CD8-positive, alpha-beta memory T cell (primary cell): ENCODE measurements at regions of chr1 and their contacts with region 1.

Region 1: GRCh38 chr1:109643385-109644230 is 12.3 kb upstream of the GSTM4 start:
- DNase-seq: peak; percentile 67 to 88 (median 74)
- H3K4me3 ChIP-seq: no peak overlapping the region
- H3K4me3 Mint-ChIP-seq: no peak overlapping the region
- H3K27ac ChIP-seq: no peak overlapping the region
- H3K27ac Mint-ChIP-seq: peak overlapping the region in 2 of 8 donors; percentile 29 to 54
- H3K4me1 ChIP-seq: peaks cover 4% of the 10 kb centered on the region
- H3K4me1 Mint-ChIP-seq: peaks cover 4 to 12% (median 7%) of the 10 kb centered on the region in 3 donors
- H3K27me3 ChIP-seq: no peaks in the 10 kb centered on the region
- H3K27me3 Mint-ChIP-seq: peaks cover 0 to 3% of the 10 kb centered on the region in 2 donors

Region 2: DNA sequence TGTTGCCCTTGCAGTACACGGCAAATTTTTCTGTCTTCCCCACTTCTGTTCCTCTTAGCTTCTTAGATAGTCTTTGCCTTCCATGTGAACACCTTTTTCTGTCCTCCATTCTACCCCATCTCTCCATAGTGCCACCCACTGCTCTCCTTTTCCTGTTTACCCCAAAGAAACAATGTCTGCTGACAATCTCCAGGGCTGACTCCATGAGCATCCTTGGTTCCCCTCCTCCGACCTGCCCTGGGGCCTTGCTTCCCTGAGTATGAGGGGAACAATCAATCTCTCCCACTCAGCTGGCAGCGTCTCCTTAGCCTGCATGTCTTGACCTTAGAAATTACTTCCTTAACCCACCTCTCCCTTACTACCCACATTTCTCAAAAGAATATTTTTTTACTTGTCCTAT is 324.5 kb before region 1 on chr1:
- CTCF ChIA-PET with region 1: no interaction called
- POLR2A ChIA-PET with region 1: no interaction called
- DNase-seq: no peak
- H3K4me3 ChIP-seq: no peak overlapping the region
- H3K4me3 Mint-ChIP-seq: no peak overlapping the region
- H3K27ac ChIP-seq: no peak overlapping the region
- H3K27ac Mint-ChIP-seq: no peak overlapping the region
- H3K4me1 ChIP-seq: no peaks in the 10 kb centered on the region
- H3K4me1 Mint-ChIP-seq: no peaks in the 10 kb centered on the region
- H3K27me3 ChIP-seq: no peaks in the 10 kb centered on the region
- H3K27me3 Mint-ChIP-seq: peaks cover 0 to 4% of the 10 kb centered on the region in 2 donors

Region 3: DNA sequence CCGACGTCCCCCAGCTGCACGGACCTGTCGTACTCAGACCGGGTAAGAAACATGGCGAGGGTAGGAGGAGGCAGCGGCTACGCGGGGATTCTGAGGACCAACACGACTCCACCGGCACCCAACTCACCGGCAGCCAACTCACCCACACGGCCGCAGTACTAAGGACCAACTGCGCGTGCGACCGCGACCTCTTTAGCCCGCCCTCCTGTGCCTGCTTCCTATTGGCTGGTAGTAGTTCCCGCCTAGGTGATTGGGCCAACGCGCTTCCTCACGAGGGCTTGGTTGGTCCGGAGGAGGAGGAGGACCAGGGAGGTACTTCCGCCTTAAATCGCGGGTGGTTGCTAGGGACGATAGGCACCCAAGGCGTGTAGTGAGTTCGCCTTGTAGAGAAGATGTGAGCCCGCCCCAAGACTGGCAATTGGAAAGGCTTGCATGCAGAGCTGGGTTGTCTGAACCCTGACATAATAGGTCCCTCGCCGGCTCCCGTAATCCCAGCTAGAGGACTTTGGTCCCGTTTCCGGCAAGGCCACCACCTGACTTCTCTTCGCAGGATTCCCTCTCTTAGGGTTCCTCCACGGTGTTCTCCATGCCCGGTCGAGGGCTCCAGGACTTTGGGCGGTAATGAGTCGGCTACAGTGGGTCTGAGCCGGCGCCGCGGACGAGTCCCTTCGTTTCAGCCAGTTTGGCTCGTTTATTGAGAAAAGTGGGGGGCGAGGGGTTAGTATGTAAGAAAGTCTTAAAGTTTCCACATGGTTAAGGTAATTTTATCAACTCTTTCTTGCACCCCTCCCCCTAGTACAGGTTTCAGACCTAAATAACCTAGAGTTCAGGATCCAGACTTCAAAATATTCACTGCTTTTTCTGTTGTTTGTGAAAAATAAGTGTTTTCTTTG is 217.1 kb before region 1 on chr1 and contains the start of gene PSMA5:
- CTCF ChIA-PET with region 1: interaction called, 4 read pairs
- POLR2A ChIA-PET with region 1: interaction called, 10 read pairs
- DNase-seq: peak; percentile 89 to 98 (median 94)
- H3K4me3 ChIP-seq: peak within 1 kb of the TSS; percentile 85
- H3K4me3 Mint-ChIP-seq: peak within 1 kb of the TSS; percentile 96 to 99 (median 98)
- H3K27ac ChIP-seq: peak within 1 kb of the TSS; percentile 94
- H3K27ac Mint-ChIP-seq: peak within 1 kb of the TSS; percentile 96 to 100 (median 99)
- H3K4me1 ChIP-seq: peaks cover 45% of the 10 kb centered on the region
- H3K4me1 Mint-ChIP-seq: peaks cover 35 to 47% (median 47%) of the 10 kb centered on the region in 3 donors
- H3K27me3 ChIP-seq: no peaks in the 10 kb centered on the region
- H3K27me3 Mint-ChIP-seq: no peaks in the 10 kb centered on the region
- total RNA-seq, gene PSMA5: 207 to 238 TPM

Region 4: GRCh38 chr1:109484519-109484975 is 159.1 kb before region 1 on chr1:
- CTCF ChIA-PET with region 1: no interaction called
- POLR2A ChIA-PET with region 1: no interaction called
- DNase-seq: no peak
- H3K4me3 ChIP-seq: peak overlapping the region; percentile 78
- H3K4me3 Mint-ChIP-seq: peak overlapping the region; percentile 85 to 99 (median 94)
- H3K27ac ChIP-seq: peak overlapping the region; percentile 79
- H3K27ac Mint-ChIP-seq: peak overlapping the region; percentile 73 to 95 (median 87)
- H3K4me1 ChIP-seq: peaks cover 23% of the 10 kb centered on the region
- H3K4me1 Mint-ChIP-seq: peaks cover 19 to 39% (median 33%) of the 10 kb centered on the region in 3 donors
- H3K27me3 ChIP-seq: no peaks in the 10 kb centered on the region
- H3K27me3 Mint-ChIP-seq: peaks cover 1 to 2% of the 10 kb centered on the region in 2 donors

Region 5: GRCh38 chr1:109620841-109621286 is 22.7 kb before region 1 on chr1:
- CTCF ChIA-PET with region 1: interaction called, 52 read pairs
- POLR2A ChIA-PET with region 1: interaction called, 4 read pairs
- DNase-seq: peak; percentile 95 to 99 (median 96)
- H3K4me3 ChIP-seq: peak overlapping the region; percentile 94
- H3K4me3 Mint-ChIP-seq: peak overlapping the region; percentile 91 to 100 (median 97)
- H3K27ac ChIP-seq: peak overlapping the region; percentile 91
- H3K27ac Mint-ChIP-seq: peak overlapping the region; percentile 91 to 99 (median 98)
- H3K4me1 ChIP-seq: peaks cover 58% of the 10 kb centered on the region
- H3K4me1 Mint-ChIP-seq: peaks cover 62 to 77% (median 65%) of the 10 kb centered on the region in 3 donors
- H3K27me3 ChIP-seq: no peaks in the 10 kb centered on the region
- H3K27me3 Mint-ChIP-seq: peaks cover 0 to 2% of the 10 kb centered on the region in 2 donors

Region 6: GRCh38 chr1:109630081-109630897 is 13.3 kb before region 1 on chr1:
- CTCF ChIA-PET with region 1: interaction called, 52 read pairs
- POLR2A ChIA-PET with region 1: no interaction called
- DNase-seq: peak in 2 of 5 donors; percentile 37 to 63
- H3K4me3 ChIP-seq: no peak overlapping the region
- H3K4me3 Mint-ChIP-seq: peak overlapping the region in 1 of 7 donors; percentile 70
- H3K27ac ChIP-seq: no peak overlapping the region
- H3K27ac Mint-ChIP-seq: peak overlapping the region in 4 of 8 donors; percentile 35 to 84 (median 58)
- H3K4me1 ChIP-seq: peaks cover 9% of the 10 kb centered on the region
- H3K4me1 Mint-ChIP-seq: peaks cover 7 to 12% (median 9%) of the 10 kb centered on the region in 3 donors
- H3K27me3 ChIP-seq: no peaks in the 10 kb centered on the region
- H3K27me3 Mint-ChIP-seq: no peaks in the 10 kb centered on the region

Region 7: DNA sequence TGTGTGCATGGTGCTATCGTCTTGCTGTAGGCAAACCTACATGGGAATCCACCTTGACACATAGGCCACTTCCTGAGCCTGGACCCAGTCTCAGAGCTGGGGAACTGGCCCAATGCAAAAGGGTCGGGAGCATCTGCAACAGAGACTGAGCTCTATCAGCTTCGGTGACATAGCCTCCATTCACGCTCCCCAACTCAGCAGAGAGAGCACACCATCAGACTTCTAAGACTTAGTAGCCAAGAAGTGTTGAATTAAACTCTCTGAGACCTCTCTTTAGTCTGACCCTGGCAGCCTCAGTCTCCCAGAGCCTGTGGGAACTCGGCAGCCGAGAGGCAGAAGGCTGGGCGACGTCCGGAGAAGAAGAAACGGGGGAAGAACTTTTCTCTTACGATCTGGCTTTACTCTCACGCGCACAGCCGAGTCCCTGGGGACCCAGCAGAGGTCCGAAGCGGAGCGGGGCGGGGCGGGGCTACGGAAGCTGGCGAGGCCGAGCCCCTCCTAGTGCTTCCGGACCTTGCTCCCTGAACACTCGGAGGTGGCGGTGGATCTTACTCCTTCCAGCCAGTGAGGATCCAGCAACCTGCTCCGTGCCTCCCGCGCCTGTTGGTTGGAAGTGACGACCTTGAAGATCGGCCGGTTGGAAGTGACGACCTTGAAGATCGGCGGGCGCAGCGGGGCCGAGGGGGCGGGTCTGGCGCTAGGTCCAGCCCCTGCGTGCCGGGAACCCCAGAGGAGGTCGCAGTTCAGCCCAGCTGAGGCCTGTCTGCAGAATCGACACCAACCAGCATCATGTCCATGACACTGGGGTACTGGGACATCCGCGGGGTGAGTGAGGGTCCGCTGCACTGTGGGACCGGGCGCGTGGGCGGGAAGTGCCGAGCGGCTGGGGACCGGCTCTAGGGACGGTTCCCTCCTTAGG is 12.3 kb after region 1 on chr1 and contains the start of gene GSTM4:
- CTCF ChIA-PET with region 1: interaction called, 60 read pairs
- POLR2A ChIA-PET with region 1: no interaction called
- DNase-seq: peak; percentile 36 to 65 (median 48)
- H3K4me3 ChIP-seq: peak within 1 kb of the TSS; percentile 72
- H3K4me3 Mint-ChIP-seq: peak within 1 kb of the TSS; percentile 87 to 97 (median 93)
- H3K27ac ChIP-seq: peak within 1 kb of the TSS; percentile 61
- H3K27ac Mint-ChIP-seq: peak within 1 kb of the TSS; percentile 38 to 94 (median 90)
- H3K4me1 ChIP-seq: peaks cover 8% of the 10 kb centered on the region
- H3K4me1 Mint-ChIP-seq: peaks cover 12 to 18% (median 14%) of the 10 kb centered on the region in 3 donors
- H3K27me3 ChIP-seq: no peaks in the 10 kb centered on the region
- H3K27me3 Mint-ChIP-seq: peaks cover 9 to 20% of the 10 kb centered on the region in 2 donors
- total RNA-seq, gene GSTM4: 1.6 to 2.7 TPM

Region 8: DNA sequence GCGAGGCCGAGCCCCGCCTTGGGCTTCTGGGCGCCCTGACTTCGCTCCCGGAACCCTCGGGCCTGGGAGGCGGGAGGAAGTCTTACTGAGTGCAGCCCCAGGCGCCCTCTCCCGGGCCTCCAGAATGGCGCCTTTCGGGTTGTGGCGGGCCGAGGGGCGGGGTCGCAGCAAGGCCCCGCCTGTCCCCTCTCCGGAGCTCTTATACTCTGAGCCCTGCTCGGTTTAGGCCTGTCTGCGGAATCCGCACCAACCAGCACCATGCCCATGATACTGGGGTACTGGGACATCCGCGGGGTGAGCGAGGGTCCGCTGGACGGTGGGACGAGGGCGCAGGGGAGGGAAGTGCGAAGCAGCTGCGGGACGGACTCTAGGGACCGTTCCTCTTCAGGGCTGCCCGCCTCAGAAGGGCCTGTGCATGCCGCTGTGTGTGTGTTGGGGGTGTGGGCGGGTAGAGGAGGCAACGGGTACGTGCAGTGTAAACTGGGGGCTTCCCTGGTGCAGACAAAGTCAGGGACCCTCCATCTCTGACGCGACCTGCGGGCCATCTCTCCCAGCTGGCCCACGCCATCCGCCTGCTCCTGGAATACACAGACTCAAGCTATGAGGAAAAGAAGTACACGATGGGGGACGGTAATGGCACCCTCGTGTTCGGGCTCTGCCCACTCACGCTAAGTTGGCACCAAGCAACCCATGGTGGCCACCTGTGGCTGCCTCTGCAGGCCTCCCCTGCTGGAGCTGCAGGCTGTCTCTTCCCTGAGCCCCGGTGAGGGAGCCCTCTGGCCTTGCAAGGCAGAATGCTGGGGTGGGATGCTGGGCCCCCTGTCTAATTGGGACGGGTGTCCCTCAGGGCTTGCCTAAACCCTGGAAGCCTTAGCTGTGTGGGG is 44.2 kb after region 1 on chr1 and contains the start of gene GSTM1:
- CTCF ChIA-PET with region 1: no interaction called
- POLR2A ChIA-PET with region 1: no interaction called
- DNase-seq: no peak
- H3K4me3 ChIP-seq: peak within 1 kb of the TSS; percentile 37
- H3K4me3 Mint-ChIP-seq: peak within 1 kb of the TSS in 4 of 7 donors; percentile 85 to 94 (median 89)
- H3K27ac ChIP-seq: no peak within 1 kb of the TSS
- H3K27ac Mint-ChIP-seq: peak within 1 kb of the TSS in 5 of 8 donors; percentile 42 to 95 (median 85)
- H3K4me1 ChIP-seq: no peaks in the 10 kb centered on the region
- H3K4me1 Mint-ChIP-seq: peaks cover 0 to 12% (median 0%) of the 10 kb centered on the region in 3 donors
- H3K27me3 ChIP-seq: no peaks in the 10 kb centered on the region
- H3K27me3 Mint-ChIP-seq: peaks cover 0 to 2% of the 10 kb centered on the region in 2 donors
- total RNA-seq, gene GSTM1: not detected

Region 9: DNA sequence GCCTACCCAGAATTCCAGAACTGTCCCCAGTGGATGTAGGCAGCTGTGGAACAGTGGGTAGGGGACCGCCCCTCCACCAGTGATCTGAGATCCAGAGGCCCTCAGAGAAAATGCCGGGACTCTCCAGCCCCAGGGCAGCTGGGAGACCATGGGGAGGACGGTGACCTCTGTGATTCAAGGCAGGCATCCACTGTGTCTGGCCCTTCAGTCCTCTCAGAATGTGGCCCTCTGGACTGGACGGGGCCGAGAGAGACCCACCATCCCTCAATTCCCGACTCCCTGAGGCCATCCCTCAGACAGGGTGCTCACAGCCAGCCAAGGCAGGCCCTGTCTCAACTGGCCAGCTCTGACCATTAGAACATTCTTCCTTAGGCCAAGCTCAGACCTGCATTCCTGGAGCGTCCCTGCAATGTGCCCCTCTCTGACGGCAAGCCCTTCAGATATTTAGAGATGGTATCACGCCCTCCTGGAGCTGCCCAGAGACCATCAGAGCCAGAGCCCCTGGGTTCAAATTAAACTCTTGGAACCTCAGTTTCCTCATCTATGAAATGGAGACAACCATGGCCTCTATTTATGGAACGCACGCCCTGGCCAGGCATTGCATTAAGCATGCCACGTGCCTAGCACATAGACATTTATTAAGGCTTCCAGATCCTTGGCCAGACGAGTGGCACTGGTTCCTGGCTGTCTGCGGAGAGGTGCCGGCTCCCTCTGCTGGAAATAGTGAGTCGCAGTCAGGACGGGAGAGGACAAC is 129.7 kb after region 1 on chr1:
- CTCF ChIA-PET with region 1: interaction called, 117 read pairs
- POLR2A ChIA-PET with region 1: interaction called, 3 read pairs
- DNase-seq: peak; percentile 27 to 81 (median 61)
- H3K4me3 ChIP-seq: no peak overlapping the region
- H3K4me3 Mint-ChIP-seq: no peak overlapping the region
- H3K27ac ChIP-seq: no peak overlapping the region
- H3K27ac Mint-ChIP-seq: peak overlapping the region in 2 of 8 donors; percentile 6 to 33
- H3K4me1 ChIP-seq: peaks cover 4% of the 10 kb centered on the region
- H3K4me1 Mint-ChIP-seq: peaks cover 5 to 15% (median 5%) of the 10 kb centered on the region in 3 donors
- H3K27me3 ChIP-seq: no peaks in the 10 kb centered on the region
- H3K27me3 Mint-ChIP-seq: peaks cover 10 to 19% of the 10 kb centered on the region in 2 donors